Calu3 (cell line): ENCODE measurements at regions of chr2 and their contacts with region 1.

Region 1: GRCh38 chr2:8681786-8682692 is at the start of gene ID2:
- DNase-seq: peak; percentile 99
- H3K4me3 Mint-ChIP-seq: peak within 1 kb of the TSS; percentile 98
- H3K27ac Mint-ChIP-seq: peak within 1 kb of the TSS; percentile 99
- H3K4me1 Mint-ChIP-seq: peaks cover 33% of the 10 kb centered on the region
- H3K27me3 Mint-ChIP-seq: no peaks in the 10 kb centered on the region
- CTCF ChIP-seq: no peak
- total RNA-seq, gene ID2: 77.8 and 92.5 TPM in 2 replicates

Region 2: GRCh38 chr2:7118606-7119503 is 1563.2 kb before region 1 on chr2:
- CTCF ChIA-PET with region 1: no interaction called
- intact Hi-C with region 1: loop called (anchors 10 kb)
- DNase-seq: peak; percentile 36
- H3K4me3 Mint-ChIP-seq: no peak overlapping the region
- H3K27ac Mint-ChIP-seq: no peak overlapping the region
- H3K4me1 Mint-ChIP-seq: no peaks in the 10 kb centered on the region
- H3K27me3 Mint-ChIP-seq: peaks cover 22% of the 10 kb centered on the region
- CTCF ChIP-seq: peak; percentile 35

Region 3: GRCh38 chr2:7427293-7428060 is 1254.6 kb before region 1 on chr2:
- CTCF ChIA-PET with region 1: interaction called, 6 read pairs
- intact Hi-C with region 1: loop called (anchors 2 kb)
- DNase-seq: peak; percentile 44
- H3K4me3 Mint-ChIP-seq: no peak overlapping the region
- H3K27ac Mint-ChIP-seq: no peak overlapping the region
- H3K4me1 Mint-ChIP-seq: peaks cover 30% of the 10 kb centered on the region
- H3K27me3 Mint-ChIP-seq: no peaks in the 10 kb centered on the region
- CTCF ChIP-seq: peak; percentile 35

Region 4: DNA sequence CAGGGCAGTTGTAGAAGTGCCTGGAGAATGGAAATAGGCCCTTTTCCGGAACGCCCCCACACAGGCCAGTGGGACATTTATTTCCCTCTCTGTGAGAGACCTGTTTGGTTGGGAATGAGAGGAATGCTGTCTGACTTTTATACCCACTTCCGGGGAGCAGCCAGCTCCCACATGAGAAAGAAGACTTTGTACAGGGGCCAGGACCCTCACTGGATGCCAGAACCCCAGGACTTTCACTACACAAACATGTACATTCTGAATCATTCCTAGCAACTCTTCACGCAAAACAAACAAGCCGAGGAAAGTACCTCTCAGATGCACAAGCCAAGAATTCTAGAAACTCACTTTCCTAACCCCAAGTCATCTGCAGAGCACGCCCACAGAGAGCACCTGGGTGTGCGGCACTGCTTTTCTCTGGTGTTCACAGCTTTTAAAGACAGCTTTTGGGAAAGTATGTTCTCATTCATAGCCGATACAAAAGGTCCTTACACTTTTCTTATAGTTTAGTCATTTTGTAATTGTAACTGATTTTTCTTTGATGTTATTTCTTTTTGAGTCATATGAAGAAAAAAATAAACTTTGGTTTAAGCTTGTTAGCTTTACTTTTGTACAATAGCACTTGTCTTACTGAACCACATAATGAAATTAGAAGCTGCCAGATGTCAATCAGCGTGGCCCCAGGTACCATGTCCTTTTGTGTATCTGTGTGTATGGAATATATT is 856.3 kb before region 1 on chr2:
- CTCF ChIA-PET with region 1: no interaction called
- intact Hi-C with region 1: loop called (anchors 1 kb)
- DNase-seq: peak; percentile 83
- H3K4me3 Mint-ChIP-seq: peak overlapping the region; percentile 62
- H3K27ac Mint-ChIP-seq: peak overlapping the region; percentile 95
- H3K4me1 Mint-ChIP-seq: peaks cover 30% of the 10 kb centered on the region
- H3K27me3 Mint-ChIP-seq: no peaks in the 10 kb centered on the region
- CTCF ChIP-seq: no peak

Region 5: DNA sequence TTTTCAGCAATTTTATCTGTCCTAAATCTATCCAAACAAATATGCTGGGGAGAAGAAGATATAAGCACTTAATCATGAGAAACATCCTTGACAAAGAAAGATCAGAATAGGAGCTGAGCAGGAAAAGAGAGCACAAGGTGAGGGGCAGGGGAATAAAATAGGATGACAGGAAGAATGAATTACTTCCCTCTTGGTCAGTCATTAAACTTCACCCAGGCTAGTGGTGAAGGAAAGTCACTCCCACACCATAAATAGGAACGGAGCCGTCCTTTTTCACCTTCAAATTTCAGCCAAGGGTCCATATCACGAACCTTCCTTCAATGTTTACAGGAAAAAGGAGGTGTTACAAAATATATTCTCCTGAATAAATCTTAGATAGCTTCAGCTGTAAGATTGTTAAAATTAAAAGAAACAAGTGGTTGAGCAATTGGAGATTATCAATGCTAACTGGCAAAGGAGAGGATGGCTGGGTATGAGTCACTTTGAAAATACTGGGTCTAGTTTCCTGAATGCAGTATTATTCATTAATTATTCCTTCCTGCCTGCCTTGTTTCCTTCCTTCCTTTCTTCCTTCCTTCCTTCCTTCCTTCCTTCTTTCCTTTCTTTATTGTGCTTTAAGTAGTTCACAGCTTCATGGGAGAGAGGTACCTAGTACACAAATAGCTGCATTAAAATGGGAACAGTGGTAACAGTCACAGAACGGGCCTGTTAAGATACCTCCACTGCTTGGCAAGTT is 292.5 kb before region 1 on chr2:
- CTCF ChIA-PET with region 1: no interaction called
- intact Hi-C with region 1: loop called (anchors 5 kb)
- DNase-seq: no peak
- H3K4me3 Mint-ChIP-seq: no peak overlapping the region
- H3K27ac Mint-ChIP-seq: peak overlapping the region; percentile 58
- H3K4me1 Mint-ChIP-seq: peaks cover 18% of the 10 kb centered on the region
- H3K27me3 Mint-ChIP-seq: no peaks in the 10 kb centered on the region
- CTCF ChIP-seq: no peak

Region 6: GRCh38 chr2:8488001-8488738 is 193.9 kb before region 1 on chr2:
- CTCF ChIA-PET with region 1: interaction called, 4 read pairs
- intact Hi-C with region 1: loop called (anchors 1 kb)
- DNase-seq: no peak
- H3K4me3 Mint-ChIP-seq: no peak overlapping the region
- H3K27ac Mint-ChIP-seq: no peak overlapping the region
- H3K4me1 Mint-ChIP-seq: peaks cover 20% of the 10 kb centered on the region
- H3K27me3 Mint-ChIP-seq: no peaks in the 10 kb centered on the region
- CTCF ChIP-seq: no peak

Region 7: DNA sequence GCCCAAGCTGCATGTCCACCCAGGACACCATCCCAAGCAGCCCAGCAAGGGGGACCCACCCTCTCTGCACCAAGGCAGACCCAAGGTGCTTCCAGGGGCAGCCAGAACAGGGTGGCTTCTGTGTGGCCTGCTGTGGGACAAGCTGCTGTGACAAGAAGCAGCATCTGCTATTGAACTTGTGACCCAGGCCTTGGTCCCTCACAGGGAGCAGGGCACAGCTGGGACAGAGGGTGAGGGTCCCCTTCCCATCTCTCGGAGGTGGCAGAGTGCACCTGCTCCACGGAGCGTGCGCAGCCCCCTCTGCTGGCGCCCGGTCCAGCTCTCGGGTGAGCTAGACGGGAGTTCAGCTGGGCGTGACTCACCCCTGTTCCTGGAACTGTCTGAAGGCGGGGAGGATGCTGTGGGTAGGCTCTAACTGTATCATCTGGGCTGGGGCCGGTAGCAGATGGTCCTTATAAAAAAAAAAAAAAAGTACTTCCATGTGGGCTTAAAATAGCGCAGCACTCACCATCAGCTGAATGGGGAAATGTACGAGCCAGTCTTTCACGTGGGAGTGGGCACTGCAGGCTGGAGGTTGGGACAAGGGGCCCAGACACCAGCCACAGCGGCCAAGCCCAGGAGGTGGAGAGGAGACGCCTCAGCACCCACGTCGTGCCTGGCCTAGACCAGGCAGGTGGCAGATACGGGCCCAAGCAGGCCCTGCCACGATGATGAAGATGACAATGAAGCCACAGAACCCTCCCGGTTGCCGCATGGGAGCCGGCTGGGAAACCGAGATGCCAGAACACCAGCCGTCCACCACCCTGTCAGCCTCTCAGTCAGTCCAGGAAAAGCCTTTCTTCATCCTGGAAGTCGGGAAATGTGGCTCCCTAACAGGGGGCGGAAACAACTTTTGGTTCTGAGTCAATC is 137.0 kb before region 1 on chr2:
- CTCF ChIA-PET with region 1: interaction called, 3 read pairs
- intact Hi-C with region 1: loop called (anchors 5 kb)
- DNase-seq: peak; percentile 60
- H3K4me3 Mint-ChIP-seq: no peak overlapping the region
- H3K27ac Mint-ChIP-seq: no peak overlapping the region
- H3K4me1 Mint-ChIP-seq: peaks cover 18% of the 10 kb centered on the region
- H3K27me3 Mint-ChIP-seq: no peaks in the 10 kb centered on the region
- CTCF ChIP-seq: no peak